Spleen (tissue), 13 donors: ENCODE measurements at regions of chr11 and their contacts with region 1.

Region 1: GRCh38 chr11:86938900-86939880 is 16.0 kb downstream of the FZD4 start:
- DNase-seq: no peak
- H3K4me3 ChIP-seq: no peak overlapping the region
- H3K27ac ChIP-seq: peak overlapping the region; percentile 30 to 78 (median 71)
- H3K4me1 ChIP-seq: peaks cover 3 to 55% (median 29%) of the 10 kb centered on the region in 6 donors
- H3K27me3 ChIP-seq: no peaks in the 10 kb centered on the region
- CTCF ChIP-seq: peak; percentile 43 to 80 (median 71)
- POLR2A ChIP-seq: no peak

Region 2: GRCh38 chr11:87154246-87154645 is 215.1 kb after region 1 on chr11:
- intact Hi-C with region 1: no loop called
- DNase-seq: no peak
- H3K4me3 ChIP-seq: no peak overlapping the region
- H3K27ac ChIP-seq: no peak overlapping the region
- H3K4me1 ChIP-seq: peaks cover 0 to 9% (median 0%) of the 10 kb centered on the region in 6 donors
- H3K27me3 ChIP-seq: no peaks in the 10 kb centered on the region
- CTCF ChIP-seq: no peak
- POLR2A ChIP-seq: no peak

Region 3: DNA sequence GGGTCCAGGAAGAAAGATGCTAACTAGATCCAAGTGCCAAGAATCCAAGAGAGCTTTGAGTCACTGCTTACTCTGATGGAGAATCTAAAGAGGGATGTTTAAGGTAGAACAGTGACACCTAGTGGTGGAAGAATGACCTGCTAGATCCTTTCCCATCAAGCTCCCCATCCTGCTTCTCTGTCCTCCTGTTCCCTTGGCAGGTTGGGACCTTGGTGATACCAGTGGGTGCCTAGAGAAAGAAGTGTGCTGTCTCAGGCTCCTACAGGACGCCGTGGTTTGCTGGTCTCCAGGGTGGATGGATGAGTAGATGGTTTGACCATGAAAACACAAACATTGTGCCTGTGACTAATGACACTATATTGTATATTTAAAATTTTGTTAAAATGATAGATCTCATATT is 482.2 kb after region 1 on chr11:
- intact Hi-C with region 1: loop called (anchors 5 kb)
- DNase-seq: no peak
- H3K4me3 ChIP-seq: no peak overlapping the region
- H3K27ac ChIP-seq: peak overlapping the region in 1 of 8 donors; percentile 21
- H3K4me1 ChIP-seq: peaks cover 0 to 11% (median 2%) of the 10 kb centered on the region in 6 donors
- H3K27me3 ChIP-seq: peaks cover 0 to 6% (median 0%) of the 10 kb centered on the region in 7 donors
- CTCF ChIP-seq: peak; percentile 53 to 83 (median 80)
- POLR2A ChIP-seq: no peak